ENCODE measurements at regions of chr2 and their contacts with region 1.

Region 1: DNA sequence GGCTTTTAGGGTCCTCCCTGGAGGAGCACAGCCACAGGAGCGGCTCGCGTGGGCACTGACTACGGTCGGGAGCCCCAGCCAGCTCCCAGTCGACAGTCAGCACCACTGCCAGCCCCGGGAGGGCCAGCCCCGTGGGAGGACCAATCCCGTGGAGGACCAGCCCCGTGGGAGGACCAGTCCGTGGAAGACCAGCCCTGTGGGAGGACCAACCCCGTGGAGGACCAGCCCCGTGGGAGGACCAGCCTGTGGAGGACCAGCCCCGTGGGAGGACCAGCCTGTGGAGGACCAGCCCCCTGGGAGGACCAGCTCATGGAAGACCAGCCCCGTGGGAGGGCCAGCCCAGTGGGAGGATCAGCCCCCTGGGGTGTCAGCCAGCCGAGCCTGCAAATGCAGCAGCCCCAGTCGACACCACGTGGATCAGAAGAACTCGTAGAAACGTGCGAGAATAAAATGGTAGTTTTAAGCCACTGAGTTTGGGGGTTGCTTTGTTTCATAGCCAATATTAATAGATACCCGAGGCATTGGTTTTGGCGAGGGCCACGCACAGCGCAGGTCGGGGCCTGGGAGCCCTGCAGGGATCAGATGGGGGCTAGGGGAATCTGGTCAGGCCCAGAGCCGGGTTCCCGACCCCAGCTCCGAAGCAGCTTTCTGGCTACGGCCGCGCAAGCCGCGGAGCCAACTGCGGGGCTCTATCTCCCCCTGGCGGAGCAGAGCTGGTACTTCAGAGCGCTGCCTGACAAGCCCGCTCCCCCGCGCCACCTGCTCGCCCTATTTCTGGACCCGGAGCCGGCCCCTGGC is 73.0 kb downstream of the TEX51 start:
- DNase-seq: peak; percentile 86
- ATAC-seq: peak; percentile 88
- H3K4me3 Mint-ChIP-seq: peak overlapping the region; percentile 14; the same call in 1 of the 2 replicates
- H3K27ac Mint-ChIP-seq: no peak overlapping the region
- H3K4me1 Mint-ChIP-seq: peaks cover 10% of the 10 kb centered on the region
- H3K27me3 Mint-ChIP-seq: peaks cover 45% of the 10 kb centered on the region
- CTCF ChIP-seq: peak; percentile 96

Region 2: DNA sequence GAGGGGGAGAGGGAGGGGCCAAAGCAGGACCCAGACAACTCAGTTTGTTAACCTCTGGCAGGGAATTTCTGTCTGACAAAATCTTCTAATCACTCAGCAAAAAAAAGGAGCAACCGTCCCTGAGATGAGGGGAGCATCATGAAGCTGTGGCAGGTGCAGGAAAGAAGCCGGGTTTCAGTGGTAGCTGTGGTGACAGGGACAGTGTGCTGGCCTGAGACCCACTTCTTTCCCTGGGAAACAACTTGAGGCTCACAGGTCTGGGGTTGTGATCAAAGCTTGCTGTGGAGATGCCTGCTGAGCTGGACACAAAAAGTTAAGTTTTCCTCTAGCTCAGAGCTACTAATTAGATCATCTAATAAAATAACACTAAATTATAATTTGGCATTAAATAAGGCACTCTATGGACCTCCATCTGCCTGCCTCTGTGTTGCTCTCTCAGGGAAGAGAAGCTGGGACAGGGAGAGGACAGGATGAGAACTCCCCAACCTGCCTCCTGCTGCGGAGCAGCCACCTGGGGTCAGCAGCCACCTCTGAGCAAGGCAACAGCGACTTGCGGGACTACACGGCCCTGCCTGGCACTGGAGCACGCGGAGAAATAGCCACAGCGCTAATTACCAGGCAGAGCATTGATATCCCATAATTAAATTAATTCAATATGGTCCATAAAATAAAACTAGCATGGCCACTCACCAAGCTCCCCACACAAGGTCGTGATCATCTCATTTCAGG is 177.6 kb before region 1 on chr2:
- CTCF ChIA-PET with region 1: interaction called, 28 read pairs
- POLR2A ChIA-PET with region 1: no interaction called
- DNase-seq: peak; percentile 32
- ATAC-seq: peak; percentile 79
- H3K4me3 Mint-ChIP-seq: no peak overlapping the region
- H3K27ac Mint-ChIP-seq: no peak overlapping the region
- H3K4me1 Mint-ChIP-seq: peaks cover 12% of the 10 kb centered on the region
- H3K27me3 Mint-ChIP-seq: no peaks in the 10 kb centered on the region
- CTCF ChIP-seq: no peak

Region 3: DNA sequence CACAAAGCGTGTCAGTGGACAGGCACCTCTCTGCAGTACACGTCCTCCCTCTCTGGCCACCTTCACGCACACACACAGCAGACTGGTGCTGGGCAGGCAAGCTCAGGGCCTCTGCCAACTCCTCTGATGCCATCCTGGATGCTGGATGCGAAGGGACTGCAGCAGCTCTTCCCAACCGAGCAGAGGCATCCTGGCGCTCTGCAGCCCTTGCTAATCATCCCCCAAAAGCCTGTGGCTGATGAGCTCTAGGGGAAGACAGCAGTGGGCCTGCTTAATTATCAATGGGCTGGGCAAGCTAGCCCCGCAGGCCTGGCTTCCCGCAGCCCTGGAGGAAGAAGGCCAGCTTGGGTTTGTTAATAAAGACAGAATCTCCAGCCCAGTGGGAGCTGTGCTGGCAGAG is 144.3 kb before region 1 on chr2:
- CTCF ChIA-PET with region 1: interaction called, 12 read pairs
- POLR2A ChIA-PET with region 1: no interaction called
- DNase-seq: no peak
- ATAC-seq: peak; percentile 71
- H3K4me3 Mint-ChIP-seq: no peak overlapping the region
- H3K27ac Mint-ChIP-seq: no peak overlapping the region
- H3K4me1 Mint-ChIP-seq: peaks cover 16% of the 10 kb centered on the region
- H3K27me3 Mint-ChIP-seq: peaks cover 9% of the 10 kb centered on the region; the same call in 1 of the 2 replicates
- CTCF ChIP-seq: no peak

Region 4: GRCh38 chr2:126886211-126886915 is 85.3 kb before region 1 on chr2:
- CTCF ChIA-PET with region 1: interaction called, 73 read pairs
- POLR2A ChIA-PET with region 1: no interaction called
- DNase-seq: peak; percentile 88
- ATAC-seq: peak; percentile 91
- H3K4me3 Mint-ChIP-seq: peak overlapping the region; percentile 72
- H3K27ac Mint-ChIP-seq: no peak overlapping the region
- H3K4me1 Mint-ChIP-seq: peaks cover 13% of the 10 kb centered on the region
- H3K27me3 Mint-ChIP-seq: peaks cover 21% of the 10 kb centered on the region
- CTCF ChIP-seq: peak; percentile 73

Region 5: GRCh38 chr2:127003070-127003800 is 31.6 kb after region 1 on chr2:
- CTCF ChIA-PET with region 1: interaction called, 21 read pairs
- POLR2A ChIA-PET with region 1: no interaction called
- DNase-seq: no peak
- ATAC-seq: peak; percentile 46
- H3K4me3 Mint-ChIP-seq: no peak overlapping the region
- H3K27ac Mint-ChIP-seq: no peak overlapping the region
- H3K4me1 Mint-ChIP-seq: peaks cover 20% of the 10 kb centered on the region
- H3K27me3 Mint-ChIP-seq: no peaks in the 10 kb centered on the region
- CTCF ChIP-seq: no peak